ENCODE measurements at regions of chr4 and their contacts with region 1.

Region 1: DNA sequence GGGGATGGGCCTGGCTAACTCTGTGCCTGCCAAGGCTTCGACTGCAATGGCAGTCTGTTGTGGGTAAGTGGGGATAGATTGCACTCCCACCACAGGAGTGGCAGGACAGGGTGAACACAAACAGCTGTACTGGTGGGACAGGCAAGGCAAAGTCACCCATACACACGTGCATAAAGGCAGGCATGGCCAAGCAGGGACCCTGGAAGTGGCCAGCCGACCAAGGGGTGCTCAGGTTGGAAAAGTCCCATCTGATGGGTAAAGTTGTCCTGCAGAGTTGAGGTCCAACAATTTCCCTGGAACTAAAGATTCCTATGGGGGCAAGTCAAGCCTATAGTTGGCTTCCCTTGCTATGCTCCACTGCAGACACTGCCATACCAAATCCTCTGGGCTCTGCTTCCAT is 1961.9 kb upstream of the ADGRL3 start:
- DNase-seq: no peak
- ATAC-seq: no peak
- H3K4me3 ChIP-seq: no peak overlapping the region
- H3K27ac ChIP-seq: no peak overlapping the region
- H3K4me1 ChIP-seq: no peaks in the 10 kb centered on the region
- H3K27me3 ChIP-seq: no peaks in the 10 kb centered on the region
- CTCF ChIP-seq: no peak

Region 2: GRCh38 chr4:59091146-59092142 is 146.8 kb before region 1 on chr4:
- intact Hi-C with region 1: no loop called
- DNase-seq: peak; percentile 45
- ATAC-seq: peak; percentile 39
- H3K4me3 ChIP-seq: no peak overlapping the region
- H3K27ac ChIP-seq: no peak overlapping the region
- H3K4me1 ChIP-seq: no peaks in the 10 kb centered on the region
- H3K27me3 ChIP-seq: no peaks in the 10 kb centered on the region
- CTCF ChIP-seq: no peak

Region 3: GRCh38 chr4:60195256-60195655 is 957.0 kb after region 1 on chr4:
- intact Hi-C with region 1: loop called (anchors 10 kb)
- DNase-seq: no peak
- ATAC-seq: no peak
- H3K4me3 ChIP-seq: no peak overlapping the region
- H3K27ac ChIP-seq: no peak overlapping the region
- H3K4me1 ChIP-seq: no peaks in the 10 kb centered on the region
- H3K27me3 ChIP-seq: no peaks in the 10 kb centered on the region
- CTCF ChIP-seq: no peak